ENCODE measurements at regions of chr16 and their contacts with region 1.

Region 1: GRCh38 chr16:50210266-50211038 is 55.9 kb upstream of the ADCY7 start:
- DNase-seq: peak; percentile 76
- H3K4me3 Mint-ChIP-seq: no peak overlapping the region
- H3K27ac Mint-ChIP-seq: peak overlapping the region; percentile 4
- H3K4me1 Mint-ChIP-seq: peaks cover 35% of the 10 kb centered on the region
- H3K27me3 Mint-ChIP-seq: no peaks in the 10 kb centered on the region

Region 2: DNA sequence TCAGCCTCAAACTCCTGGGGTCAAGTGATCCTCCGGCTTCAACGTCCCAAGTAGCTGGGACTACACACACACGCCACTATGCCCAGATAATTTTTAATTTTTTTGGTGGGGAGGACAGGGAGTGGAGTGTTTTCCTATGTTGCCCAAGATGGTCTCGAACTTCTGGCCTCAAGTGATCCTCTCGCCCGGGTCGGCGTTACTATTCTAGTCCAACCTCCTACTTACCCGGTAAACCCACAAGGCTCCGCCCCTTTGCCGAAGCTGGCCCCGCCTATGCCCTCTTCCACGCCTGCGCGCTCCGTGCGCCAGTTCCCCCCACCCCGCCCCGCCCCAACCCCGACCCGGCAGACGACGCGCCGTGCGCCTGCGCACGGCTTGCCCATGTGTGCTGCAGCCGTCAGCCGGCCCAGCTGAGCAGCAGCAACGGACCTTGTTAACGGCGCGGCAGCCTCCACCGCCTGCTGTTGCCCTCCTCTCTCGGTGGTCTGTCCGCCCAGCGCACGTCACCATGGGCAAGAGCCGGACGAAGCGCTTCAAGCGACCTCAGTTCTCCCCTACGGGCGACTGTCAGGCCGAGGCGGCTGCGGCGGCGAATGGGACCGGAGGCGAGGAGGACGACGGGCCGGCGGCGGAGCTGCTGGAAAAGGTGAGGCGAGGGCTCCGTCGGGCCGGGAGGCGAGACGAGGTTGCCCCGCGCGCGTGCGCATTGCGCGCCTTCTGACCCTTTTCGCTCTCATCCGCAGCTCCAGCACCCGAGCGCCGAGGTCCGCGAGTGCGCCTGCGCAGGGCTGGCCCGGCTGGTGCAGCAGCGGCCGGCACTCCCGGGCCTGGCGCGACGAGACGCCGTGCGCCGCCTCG is 144.6 kb before region 1 on chr16 and contains the start of gene HEATR3:
- CTCF ChIA-PET with region 1: interaction called, 124 read pairs
- POLR2A ChIA-PET with region 1: interaction called, 18 read pairs
- DNase-seq: peak; percentile 96
- H3K4me3 Mint-ChIP-seq: peak within 1 kb of the TSS; percentile 87
- H3K27ac Mint-ChIP-seq: peak within 1 kb of the TSS; percentile 92
- H3K4me1 Mint-ChIP-seq: peaks cover 42% of the 10 kb centered on the region
- H3K27me3 Mint-ChIP-seq: no peaks in the 10 kb centered on the region
- total RNA-seq, gene HEATR3: 20.7 to 21.3 TPM

Region 3: DNA sequence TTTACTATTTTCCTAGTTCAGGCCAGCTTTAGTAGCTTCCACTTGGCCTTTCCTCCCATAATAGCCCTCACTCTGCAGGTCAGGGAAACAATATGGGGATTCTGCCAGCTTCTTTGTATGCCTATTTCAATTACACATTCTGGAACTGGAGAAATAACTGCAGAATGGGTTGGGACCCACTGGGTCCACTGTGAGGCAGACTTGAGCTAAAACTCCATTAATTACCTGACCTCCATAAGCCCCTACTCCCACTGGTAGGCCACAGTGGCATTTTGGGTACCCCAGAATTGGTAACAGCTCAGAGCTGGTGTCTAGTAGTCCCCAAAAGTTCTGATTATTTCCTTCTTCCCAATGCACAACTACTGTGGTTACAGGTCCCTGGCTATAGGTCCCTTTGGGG is 74.1 kb before region 1 on chr16:
- CTCF ChIA-PET with region 1: interaction called, 14 read pairs
- POLR2A ChIA-PET with region 1: no interaction called
- DNase-seq: no peak
- H3K4me3 Mint-ChIP-seq: no peak overlapping the region
- H3K27ac Mint-ChIP-seq: no peak overlapping the region
- H3K4me1 Mint-ChIP-seq: no peaks in the 10 kb centered on the region
- H3K27me3 Mint-ChIP-seq: peaks cover 8% of the 10 kb centered on the region

Region 4: DNA sequence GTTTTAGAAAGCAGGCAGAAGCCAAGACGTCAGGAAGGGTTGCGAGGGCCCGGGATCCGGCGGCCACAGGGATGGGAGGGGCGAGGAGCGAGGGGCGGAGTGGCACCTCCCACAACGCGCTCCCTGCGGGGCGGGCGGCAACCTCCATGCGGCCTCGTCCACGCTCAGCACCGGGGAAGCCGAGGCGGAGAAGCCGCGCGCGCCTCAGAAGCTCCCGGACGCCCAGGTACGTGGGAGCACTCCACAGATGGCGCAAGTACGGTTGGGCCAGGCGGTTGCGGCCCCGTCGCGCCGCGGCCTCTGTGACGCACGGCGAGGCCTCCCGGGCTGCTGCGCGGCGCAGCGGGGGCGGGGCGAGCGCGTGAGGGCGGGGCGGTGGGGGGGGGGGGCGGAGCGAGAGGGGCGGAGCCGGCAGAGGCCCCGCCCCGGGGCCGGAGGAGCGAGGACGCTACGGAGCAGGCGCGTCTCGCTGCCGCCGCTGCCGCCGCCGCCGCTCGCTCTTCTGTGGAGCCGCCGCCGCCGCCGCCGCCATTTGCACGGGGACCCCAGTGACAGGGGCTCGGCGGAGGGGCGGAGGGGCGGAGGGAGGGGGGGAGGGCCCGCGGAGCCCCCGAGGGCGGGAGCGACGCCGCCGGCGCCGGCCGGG is 57.5 kb before region 1 on chr16 and contains the start of gene TENT4B:
- CTCF ChIA-PET with region 1: interaction called, 21 read pairs
- POLR2A ChIA-PET with region 1: interaction called, 9 read pairs
- DNase-seq: peak; percentile 89
- H3K4me3 Mint-ChIP-seq: peak within 1 kb of the TSS; percentile 77
- H3K27ac Mint-ChIP-seq: peak within 1 kb of the TSS; percentile 78
- H3K4me1 Mint-ChIP-seq: peaks cover 31% of the 10 kb centered on the region
- H3K27me3 Mint-ChIP-seq: no peaks in the 10 kb centered on the region
- total RNA-seq, gene TENT4B: 17.5 to 18.0 TPM

Region 5: GRCh38 chr16:50166511-50167500 is 43.6 kb before region 1 on chr16:
- CTCF ChIA-PET with region 1: interaction called, 10 read pairs
- POLR2A ChIA-PET with region 1: no interaction called
- DNase-seq: no peak
- H3K4me3 Mint-ChIP-seq: no peak overlapping the region
- H3K27ac Mint-ChIP-seq: peak overlapping the region; percentile 71
- H3K4me1 Mint-ChIP-seq: peaks cover 39% of the 10 kb centered on the region
- H3K27me3 Mint-ChIP-seq: no peaks in the 10 kb centered on the region

Region 6: GRCh38 chr16:50273681-50274325 is 63.4 kb after region 1 on chr16:
- CTCF ChIA-PET with region 1: interaction called, 15 read pairs
- POLR2A ChIA-PET with region 1: interaction called, 8 read pairs
- DNase-seq: peak; percentile 60
- H3K4me3 Mint-ChIP-seq: peak overlapping the region; percentile 88
- H3K27ac Mint-ChIP-seq: peak overlapping the region; percentile 98
- H3K4me1 Mint-ChIP-seq: peaks cover 98% of the 10 kb centered on the region
- H3K27me3 Mint-ChIP-seq: no peaks in the 10 kb centered on the region

Region 7: GRCh38 chr16:50301626-50302471 is 91.4 kb after region 1 on chr16:
- CTCF ChIA-PET with region 1: no interaction called
- POLR2A ChIA-PET with region 1: no interaction called
- DNase-seq: no peak
- H3K4me3 Mint-ChIP-seq: no peak overlapping the region
- H3K27ac Mint-ChIP-seq: no peak overlapping the region
- H3K4me1 Mint-ChIP-seq: no peaks in the 10 kb centered on the region
- H3K27me3 Mint-ChIP-seq: no peaks in the 10 kb centered on the region

Region 8: GRCh38 chr16:50354629-50355456 is 144.4 kb after region 1 on chr16:
- CTCF ChIA-PET with region 1: interaction called, 14 read pairs
- POLR2A ChIA-PET with region 1: interaction called, 3 read pairs
- DNase-seq: no peak
- H3K4me3 Mint-ChIP-seq: no peak overlapping the region
- H3K27ac Mint-ChIP-seq: no peak overlapping the region
- H3K4me1 Mint-ChIP-seq: peaks cover 30% of the 10 kb centered on the region
- H3K27me3 Mint-ChIP-seq: no peaks in the 10 kb centered on the region

Measured in activated CD4-positive, alpha-beta memory T cell treated with anti-CD3 and anti-CD28 coated beads, Interleukin-2, amount 10 ng/mL, durations not matched to agents 7 days and 5 days (primary cell).